Right ventricle myocardium superior (tissue), 1 donor: ENCODE measurements at regions of chr17 and their contacts with region 1.

Region 1: DNA sequence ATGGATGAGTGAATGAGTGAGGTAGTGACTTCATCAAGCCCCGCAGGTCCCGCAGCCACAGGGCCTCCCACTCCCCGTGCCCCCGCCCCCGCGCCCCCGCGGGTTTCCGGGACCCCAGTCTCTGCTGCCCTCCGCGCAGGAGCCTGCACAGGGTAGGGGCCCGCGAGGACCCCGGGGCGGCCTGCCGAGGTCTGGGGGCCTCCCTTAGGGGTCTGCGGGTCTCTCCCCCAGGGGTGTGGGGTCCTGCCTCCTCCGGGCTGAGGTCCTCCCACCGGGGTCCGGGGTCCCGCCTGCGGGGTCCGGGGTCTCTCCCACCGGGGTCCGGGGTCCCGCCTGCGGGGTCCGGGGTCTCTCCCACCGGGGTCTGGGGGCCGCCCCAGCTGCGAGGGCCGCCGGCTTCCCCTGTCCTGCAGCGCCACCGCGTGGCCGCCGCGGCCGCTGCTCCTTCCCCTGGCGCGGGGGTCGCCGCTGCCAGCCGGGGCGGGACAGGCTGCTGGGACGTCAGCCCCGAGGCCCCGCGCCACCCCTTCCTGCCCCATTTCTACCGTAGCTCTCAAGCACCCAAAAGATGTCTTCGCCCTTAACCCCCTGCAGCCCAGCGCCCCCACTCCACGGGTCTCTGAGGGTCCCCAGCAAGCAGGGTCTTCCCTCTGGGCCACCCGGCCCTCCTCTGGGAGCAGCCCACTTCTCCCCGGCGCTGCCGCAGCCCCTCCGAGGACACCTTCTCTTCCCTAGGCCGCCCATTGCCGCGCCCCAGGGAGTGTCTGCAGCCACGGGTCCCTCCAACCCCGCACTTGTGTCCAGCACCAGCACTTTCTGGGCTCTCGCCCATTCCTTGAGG is 10.4 kb upstream of the CHMP6 start:
- DNase-seq: no peak
- ATAC-seq: peak; percentile 70

Region 2: GRCh38 chr17:80426681-80427326 is 554.5 kb before region 1 on chr17:
- intact Hi-C with region 1: loop called (anchors 5 kb)
- DNase-seq: peak; percentile 84
- ATAC-seq: peak; percentile 86

Region 3: DNA sequence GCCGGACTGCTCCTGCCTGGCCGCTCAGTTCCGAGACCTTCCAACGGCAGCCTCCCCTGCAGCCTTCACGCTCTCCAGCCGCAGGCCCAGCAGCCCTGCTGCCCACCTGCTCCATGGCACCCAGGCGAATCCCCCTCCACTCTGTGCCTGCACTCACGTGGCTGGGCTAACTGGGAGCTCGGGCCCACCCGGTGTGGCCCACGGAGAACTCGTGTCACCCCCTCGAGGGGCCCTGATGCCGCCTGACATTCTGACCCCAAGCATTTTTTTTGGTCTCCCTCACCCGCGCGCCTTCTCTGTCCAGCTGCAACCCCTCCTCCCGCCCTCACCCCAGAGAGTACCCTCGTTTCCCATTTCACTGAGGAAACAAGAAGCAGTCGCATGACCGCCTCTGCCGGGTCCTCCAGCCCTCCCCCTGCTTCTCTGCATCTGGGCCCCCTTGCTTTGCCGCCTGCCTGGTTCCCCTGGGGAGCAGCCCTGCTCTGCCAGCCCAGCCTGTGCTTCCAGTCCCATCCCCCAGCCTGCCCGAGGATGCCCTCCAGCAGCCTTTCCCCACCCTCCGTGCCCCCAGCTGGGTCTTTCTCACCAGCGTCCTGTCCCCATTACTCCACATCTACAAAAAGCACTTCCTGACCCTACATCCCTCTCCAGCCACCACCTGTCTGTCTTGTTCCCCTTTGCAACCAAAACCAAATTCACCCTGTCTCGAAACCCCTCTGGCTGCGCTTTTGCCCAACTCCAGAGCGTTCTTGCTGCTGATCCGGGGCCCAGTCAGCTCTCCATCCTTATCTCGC is 136.0 kb before region 1 on chr17:
- intact Hi-C with region 1: no loop called
- DNase-seq: no peak
- ATAC-seq: no peak

Region 4: GRCh38 chr17:80866147-80866793 is 115.0 kb before region 1 on chr17:
- intact Hi-C with region 1: loop called (anchors 5 kb)
- DNase-seq: peak; percentile 76
- ATAC-seq: peak; percentile 76

Region 5: DNA sequence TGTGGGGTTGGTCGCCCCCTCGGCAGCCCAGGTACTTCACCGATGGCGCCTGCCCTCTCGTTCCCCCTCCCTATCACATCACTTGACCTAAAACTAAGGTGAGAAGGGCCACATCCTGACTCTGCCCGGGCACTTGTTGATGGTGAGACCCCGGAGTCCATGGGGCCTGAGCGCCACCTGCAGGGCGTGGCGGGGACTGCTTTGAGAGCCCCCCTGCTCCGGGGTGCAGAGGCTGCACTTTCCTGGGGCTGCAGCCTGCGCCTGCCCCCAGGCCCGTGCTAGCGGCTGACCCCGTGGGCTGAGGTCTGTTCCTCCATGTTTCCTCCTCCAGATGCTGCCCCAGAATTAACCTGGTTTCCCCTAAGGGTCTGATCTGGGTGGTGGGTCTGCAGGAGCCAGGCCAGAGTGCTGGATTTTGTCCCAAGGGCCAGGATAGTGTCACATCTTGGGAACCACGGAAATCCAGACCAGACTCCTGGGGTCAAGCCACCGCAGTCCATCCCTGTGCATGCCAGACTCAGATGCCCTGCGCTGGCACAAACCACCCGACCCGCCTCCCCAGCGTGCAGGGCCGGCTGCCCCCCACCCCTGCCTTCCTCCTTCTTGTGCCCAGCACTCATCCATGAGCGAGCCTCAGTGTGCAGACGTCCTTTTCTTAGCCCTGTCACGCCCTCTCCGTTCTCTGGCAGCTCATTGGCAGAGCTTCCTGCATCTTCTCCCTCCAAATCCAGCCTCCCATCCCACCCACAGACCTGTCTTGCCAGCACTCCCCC is 260.6 kb after region 1 on chr17:
- intact Hi-C with region 1: loop called (anchors 10 kb)
- DNase-seq: no peak
- ATAC-seq: no peak